Mammary epithelial cell (primary cell): ENCODE measurements at regions of chr4 and their contacts with region 1.

Region 1: DNA sequence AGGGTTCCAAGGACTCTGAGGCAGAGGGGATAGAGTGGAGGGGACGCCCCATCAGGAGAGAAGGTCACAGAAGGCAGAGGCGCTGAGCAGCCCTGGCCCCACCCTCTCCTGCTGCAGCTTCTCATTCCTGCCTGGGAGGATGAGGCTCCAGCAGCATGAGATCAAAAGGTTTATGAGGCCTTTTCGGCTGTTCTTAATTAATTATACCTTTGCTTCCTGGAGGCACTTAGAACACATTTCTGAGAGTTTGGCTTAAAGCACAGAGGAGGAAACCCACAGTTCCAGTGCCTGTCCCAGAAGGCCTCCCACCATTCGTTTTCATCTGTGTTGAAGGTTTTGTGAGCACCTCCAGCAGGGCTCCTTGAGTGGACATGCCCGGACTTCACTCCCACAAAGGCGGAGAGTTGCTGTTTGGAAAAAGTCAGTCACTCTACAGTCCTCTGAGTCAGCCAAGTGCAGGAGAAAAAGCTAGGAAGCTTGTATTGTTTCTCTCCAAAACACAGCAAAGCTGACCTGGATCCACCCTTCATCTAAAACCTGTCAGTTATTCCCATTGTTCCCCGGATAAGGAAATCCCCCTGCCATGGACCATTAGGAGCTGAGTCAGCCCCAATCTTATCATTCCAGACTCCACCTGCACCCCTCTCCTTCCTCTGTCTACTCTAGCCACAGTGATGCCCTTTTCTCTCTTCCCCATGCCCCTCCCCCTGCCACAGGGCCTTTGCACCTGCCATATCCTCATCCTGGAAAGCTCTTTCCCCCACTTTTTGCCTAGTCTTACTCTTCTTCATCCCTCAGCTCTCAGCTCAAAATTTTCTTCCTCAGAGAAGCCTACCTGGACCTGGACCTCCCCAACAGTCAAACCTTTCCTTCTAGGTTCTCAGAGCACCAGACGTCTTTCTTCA is 276.8 kb downstream of the FBXW7 start:
- DNase-seq: peak; percentile 96
- H3K4me3 ChIP-seq: no peak overlapping the region
- H3K27ac ChIP-seq: peak overlapping the region; percentile 95
- H3K4me1 ChIP-seq: peaks cover 36% of the 10 kb centered on the region
- H3K27me3 ChIP-seq: no peaks in the 10 kb centered on the region
- CTCF ChIP-seq: peak in 1 of 2 donors; percentile 6

Region 2: DNA sequence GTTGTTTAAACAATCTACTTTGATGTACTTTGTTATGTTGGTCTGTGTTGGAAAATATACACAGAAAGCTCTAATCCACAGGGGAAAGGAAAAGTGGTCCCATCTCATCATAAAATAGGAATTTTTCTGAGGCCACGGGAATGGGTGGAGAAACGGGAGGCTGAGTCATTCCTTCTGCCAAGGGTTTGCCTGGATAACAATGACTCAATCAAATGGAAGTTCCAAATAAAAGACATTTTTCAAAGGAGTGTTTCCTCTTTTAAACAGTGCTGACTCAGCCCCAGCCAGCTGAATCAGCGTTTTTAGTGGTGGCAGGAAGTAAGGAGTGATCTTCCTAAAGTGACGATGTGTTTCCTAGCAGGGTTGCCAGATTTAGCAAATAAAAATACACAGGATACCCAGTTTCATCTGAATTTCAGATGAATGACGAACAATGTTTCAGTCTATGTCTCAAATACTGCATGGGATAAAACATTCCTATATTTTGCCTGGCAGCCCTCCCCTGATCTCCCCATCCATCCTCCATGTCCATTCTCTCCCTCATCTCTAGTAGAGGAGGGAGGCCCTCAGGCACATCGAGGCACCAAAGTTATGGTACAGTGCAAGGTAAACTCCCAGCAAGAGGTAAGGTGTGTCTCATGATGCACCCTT is 152.8 kb before region 1 on chr4:
- CTCF ChIA-PET with region 1: no interaction called
- dilution Hi-C with region 1: no loop called
- in situ Hi-C with region 1: no loop called
- intact Hi-C with region 1: loop called (anchors 1 kb)
- DNase-seq: peak; percentile 92
- H3K4me3 ChIP-seq: no peak overlapping the region
- H3K27ac ChIP-seq: peak overlapping the region; percentile 74
- H3K4me1 ChIP-seq: peaks cover 28% of the 10 kb centered on the region
- H3K27me3 ChIP-seq: no peaks in the 10 kb centered on the region
- CTCF ChIP-seq: no peak

Region 3: GRCh38 chr4:152310262-152310661 is 51.2 kb after region 1 on chr4:
- CTCF ChIA-PET with region 1: interaction called, 5 read pairs
- dilution Hi-C with region 1: no loop called
- in situ Hi-C with region 1: no loop called
- intact Hi-C with region 1: loop called (anchors 1 kb)
- DNase-seq: peak; percentile 85
- H3K4me3 ChIP-seq: no peak overlapping the region
- H3K27ac ChIP-seq: peak overlapping the region; percentile 38
- H3K4me1 ChIP-seq: peaks cover 24% of the 10 kb centered on the region
- H3K27me3 ChIP-seq: no peaks in the 10 kb centered on the region
- CTCF ChIP-seq: no peak

Region 4: GRCh38 chr4:152325818-152326217 is 66.8 kb after region 1 on chr4:
- CTCF ChIA-PET with region 1: no interaction called
- dilution Hi-C with region 1: no loop called
- in situ Hi-C with region 1: no loop called
- intact Hi-C with region 1: loop called (anchors 1 kb)
- DNase-seq: peak; percentile 90
- H3K4me3 ChIP-seq: no peak overlapping the region
- H3K27ac ChIP-seq: peak overlapping the region; percentile 72
- H3K4me1 ChIP-seq: peaks cover 38% of the 10 kb centered on the region
- H3K27me3 ChIP-seq: no peaks in the 10 kb centered on the region
- CTCF ChIP-seq: no peak